HepG2 (cell line): ENCODE measurements at regions of chr20 and their contacts with region 1.

Region 1: GRCh38 chr20:32789896-32790750 is 27.9 kb downstream of the DNMT3B start:
- DNase-seq: peak; percentile 68
- ATAC-seq: peak; percentile 95
- H3K4me3 ChIP-seq: no peak overlapping the region
- H3K27ac ChIP-seq: no peak overlapping the region
- H3K4me1 ChIP-seq: peaks cover 10% of the 10 kb centered on the region; the same call in 1 of the 2 replicates
- H3K27me3 ChIP-seq: no peaks in the 10 kb centered on the region
- CTCF ChIP-seq: peak; percentile 100
- EP300 ChIP-seq: no peak
- POLR2A ChIP-seq: no peak
- RAD21 ChIP-seq: peak; percentile 94

Region 2: DNA sequence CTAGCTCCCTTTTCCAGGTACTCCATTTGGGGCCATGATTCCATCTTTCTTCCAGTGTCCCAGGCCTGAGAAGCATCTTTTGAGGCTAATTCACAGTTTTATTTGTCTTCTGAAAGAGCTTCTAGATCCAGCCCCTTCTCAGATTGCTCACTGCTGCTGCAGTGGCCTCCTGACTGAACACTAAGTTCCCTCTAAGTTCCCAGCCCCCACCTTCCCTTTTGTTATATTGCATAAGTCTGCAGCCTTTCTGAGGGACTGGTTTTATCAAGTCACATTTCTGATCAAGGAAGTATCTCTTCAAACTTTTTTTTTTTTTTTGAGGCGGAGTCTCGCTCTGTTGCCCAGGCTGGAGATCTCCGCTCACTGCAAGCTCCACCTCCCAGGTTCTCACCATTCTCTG is 40.3 kb after region 1 on chr20:
- CTCF ChIA-PET with region 1: no interaction called
- POLR2A ChIA-PET with region 1: no interaction called
- in situ Hi-C with region 1: no loop called
- intact Hi-C with region 1: loop called (anchors 5 kb)
- DNase-seq: no peak
- ATAC-seq: no peak
- H3K4me3 ChIP-seq: no peak overlapping the region
- H3K27ac ChIP-seq: no peak overlapping the region
- H3K4me1 ChIP-seq: no peaks in the 10 kb centered on the region
- H3K27me3 ChIP-seq: no peaks in the 10 kb centered on the region
- CTCF ChIP-seq: no peak
- EP300 ChIP-seq: no peak
- POLR2A ChIP-seq: no peak
- RAD21 ChIP-seq: no peak

Region 3: GRCh38 chr20:32894026-32894483 is 103.9 kb after region 1 on chr20:
- CTCF ChIA-PET with region 1: interaction called, 20 read pairs
- POLR2A ChIA-PET with region 1: no interaction called
- in situ Hi-C with region 1: loop called (anchors 5 kb)
- intact Hi-C with region 1: loop called (anchors 1 kb)
- DNase-seq: peak; percentile 59
- ATAC-seq: peak; percentile 89
- H3K4me3 ChIP-seq: no peak overlapping the region
- H3K27ac ChIP-seq: no peak overlapping the region
- H3K4me1 ChIP-seq: no peaks in the 10 kb centered on the region
- H3K27me3 ChIP-seq: peaks cover 5 to 39% of the 10 kb centered on the region in 2 experiments; a peak in 3 of 5 replicates
- CTCF ChIP-seq: peak; percentile 92
- EP300 ChIP-seq: no peak
- POLR2A ChIP-seq: no peak
- RAD21 ChIP-seq: peak; percentile 88

Region 4: GRCh38 chr20:32945710-32946221 is 155.6 kb after region 1 on chr20:
- CTCF ChIA-PET with region 1: interaction called, 13 read pairs
- POLR2A ChIA-PET with region 1: no interaction called
- in situ Hi-C with region 1: no loop called
- intact Hi-C with region 1: no loop called
- DNase-seq: peak; percentile 55
- ATAC-seq: peak; percentile 96
- H3K4me3 ChIP-seq: no peak overlapping the region
- H3K27ac ChIP-seq: no peak overlapping the region
- H3K4me1 ChIP-seq: peaks cover 9% of the 10 kb centered on the region
- H3K27me3 ChIP-seq: peaks cover 0 to 4% of the 10 kb centered on the region in 2 experiments; a peak in 1 of 5 replicates
- CTCF ChIP-seq: peak; percentile 63
- EP300 ChIP-seq: no peak
- POLR2A ChIP-seq: no peak
- RAD21 ChIP-seq: peak; percentile 64

Region 5: DNA sequence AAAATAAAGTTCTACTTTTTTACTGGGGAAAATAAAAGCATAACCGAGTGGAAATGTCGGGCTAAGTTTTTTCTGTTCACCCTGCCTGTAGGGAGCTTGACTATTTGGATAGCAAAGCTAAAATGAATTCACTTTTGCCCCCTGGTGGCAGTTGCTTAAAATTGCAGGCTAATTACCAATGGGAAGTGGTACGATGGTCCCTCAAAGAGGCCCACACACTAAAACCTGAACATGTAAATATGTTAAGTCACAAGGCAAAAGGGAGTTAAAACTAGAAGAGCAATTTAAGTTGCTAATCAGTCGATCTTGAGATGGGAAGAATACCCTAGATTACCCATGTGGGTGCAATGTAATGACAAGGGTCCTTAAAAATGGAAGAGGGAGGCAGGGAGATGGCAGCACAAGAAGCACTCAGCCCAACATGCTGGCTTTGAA is 215.0 kb after region 1 on chr20:
- CTCF ChIA-PET with region 1: interaction called, 6 read pairs
- POLR2A ChIA-PET with region 1: no interaction called
- in situ Hi-C with region 1: no loop called
- intact Hi-C with region 1: loop called (anchors 10 kb)
- DNase-seq: peak; percentile 72
- ATAC-seq: no peak
- H3K4me3 ChIP-seq: peak overlapping the region in 1 of 3 experiments; percentile 79; a peak in 1 of 6 replicates
- H3K27ac ChIP-seq: no peak overlapping the region
- H3K4me1 ChIP-seq: peaks cover 86% of the 10 kb centered on the region
- H3K27me3 ChIP-seq: peaks cover 0 to 6% of the 10 kb centered on the region in 2 experiments; a peak in 1 of 5 replicates
- CTCF ChIP-seq: peak; percentile 82
- EP300 ChIP-seq: no peak
- POLR2A ChIP-seq: no peak
- RAD21 ChIP-seq: peak; percentile 63

Region 6: DNA sequence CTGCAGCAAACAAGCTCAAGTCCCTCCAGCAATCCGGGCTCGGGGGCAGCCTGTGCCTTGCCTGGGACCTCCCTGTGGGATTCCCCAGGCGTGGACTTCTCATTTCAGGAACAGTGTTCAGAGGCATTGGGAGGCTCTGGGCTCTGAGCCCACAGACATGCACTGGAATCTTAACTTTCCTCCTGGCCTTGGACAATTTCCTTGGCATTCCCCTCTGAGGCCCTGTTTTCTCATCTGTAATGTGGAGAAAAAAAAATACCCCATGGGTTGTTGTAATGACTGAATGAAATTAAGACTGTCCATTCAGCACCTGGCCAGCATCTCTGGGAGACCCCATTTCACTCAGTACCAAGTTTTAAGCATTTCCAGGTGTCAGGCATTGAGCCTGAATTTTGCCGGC is 306.9 kb after region 1 on chr20:
- CTCF ChIA-PET with region 1: interaction called, 28 read pairs
- POLR2A ChIA-PET with region 1: no interaction called
- in situ Hi-C with region 1: loop called (anchors 5 kb)
- intact Hi-C with region 1: loop called (anchors 1 kb)
- DNase-seq: no peak
- ATAC-seq: no peak
- H3K4me3 ChIP-seq: no peak overlapping the region
- H3K27ac ChIP-seq: no peak overlapping the region
- H3K4me1 ChIP-seq: no peaks in the 10 kb centered on the region
- H3K27me3 ChIP-seq: no peaks in the 10 kb centered on the region; a peak in 1 of 5 replicates
- CTCF ChIP-seq: no peak
- EP300 ChIP-seq: no peak
- POLR2A ChIP-seq: no peak
- RAD21 ChIP-seq: no peak

Region 7: DNA sequence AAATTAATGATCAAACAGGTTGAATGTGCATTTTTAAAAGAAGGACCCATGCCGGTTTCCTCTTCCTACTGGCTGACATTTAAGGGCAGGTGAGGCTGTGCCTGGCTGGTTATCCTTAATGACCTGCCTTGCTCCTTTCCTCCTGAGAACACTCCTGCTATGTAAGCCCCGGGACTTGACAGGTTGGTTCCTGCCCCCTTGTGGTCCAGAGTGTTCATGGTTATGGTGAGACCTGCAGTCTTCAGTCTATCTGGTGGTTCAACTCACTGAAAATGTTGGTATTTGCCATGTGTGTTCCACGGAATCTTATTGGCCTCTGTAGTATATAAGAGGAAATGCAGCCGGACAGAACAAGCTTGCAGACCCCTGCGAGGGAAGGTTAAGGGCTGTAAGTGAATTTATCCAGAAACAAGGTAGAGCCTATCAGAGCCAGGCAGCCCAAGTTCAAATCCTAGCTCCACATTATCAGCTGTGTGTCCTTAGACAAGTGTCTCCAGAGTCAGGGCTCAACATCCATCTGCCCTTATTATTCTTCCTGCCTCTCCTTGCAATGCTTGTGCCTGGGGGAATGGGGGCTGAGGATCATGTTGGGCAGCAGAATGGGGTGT is 421.8 kb after region 1 on chr20:
- CTCF ChIA-PET with region 1: no interaction called
- POLR2A ChIA-PET with region 1: no interaction called
- in situ Hi-C with region 1: no loop called
- intact Hi-C with region 1: loop called (anchors 5 kb)
- DNase-seq: peak; percentile 78
- ATAC-seq: peak; percentile 94
- H3K4me3 ChIP-seq: no peak overlapping the region
- H3K27ac ChIP-seq: no peak overlapping the region
- H3K4me1 ChIP-seq: no peaks in the 10 kb centered on the region
- H3K27me3 ChIP-seq: peaks cover 2 to 4% of the 10 kb centered on the region in 2 experiments; a peak in 1 of 5 replicates
- CTCF ChIP-seq: peak; percentile 83
- EP300 ChIP-seq: no peak
- POLR2A ChIP-seq: no peak
- RAD21 ChIP-seq: peak; percentile 52